HCT116 (cell line): ENCODE measurements at regions of chr14 and their contacts with region 1.

Region 1: GRCh38 chr14:36070031-36070719 is 106.3 kb downstream of the PTCSC3 start:
- DNase-seq: peak; percentile 55
- ATAC-seq: peak; percentile 82
- H3K4me3 ChIP-seq: no peak overlapping the region
- H3K27ac ChIP-seq: no peak overlapping the region
- H3K4me1 ChIP-seq: peaks cover 12 to 17% of the 10 kb centered on the region in 2 experiments
- H3K27me3 ChIP-seq: no peaks in the 10 kb centered on the region
- CTCF ChIP-seq: peak; percentile 59 to 96 (median 89); a peak in 5 of 6 replicates
- POLR2A ChIP-seq: no peak
- RAD21 ChIP-seq: peak; percentile 80

Region 2: DNA sequence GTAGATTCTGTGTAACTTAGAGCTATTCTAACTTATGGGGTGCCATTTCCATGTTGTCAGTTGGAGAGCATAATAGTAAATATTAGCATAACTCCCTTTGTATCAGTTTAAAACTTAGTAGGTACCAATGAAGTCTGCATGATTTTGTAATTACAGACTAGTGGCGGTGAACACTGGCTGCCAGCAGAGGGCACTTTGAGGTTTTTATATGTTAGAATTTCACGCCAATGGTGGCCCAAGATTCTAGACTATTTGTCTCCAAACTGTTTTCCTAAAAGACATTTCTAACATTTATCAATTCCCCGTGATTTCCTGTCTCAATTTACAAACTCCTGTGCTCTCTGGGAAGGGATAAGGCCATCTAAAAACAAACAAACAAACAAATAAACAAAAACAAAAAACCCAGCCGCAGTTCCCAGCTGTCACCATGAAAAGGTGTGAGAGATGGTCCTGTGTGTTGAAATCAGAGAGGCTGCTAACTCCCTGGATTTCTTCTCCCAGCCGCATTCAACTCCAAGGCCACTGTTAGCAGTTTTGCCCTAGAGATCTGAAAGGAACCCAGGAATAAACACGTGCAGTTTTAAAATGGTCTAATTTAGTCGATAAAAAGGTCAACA is 186.4 kb before region 1 on chr14:
- CTCF ChIA-PET with region 1: interaction called, 62 read pairs
- POLR2A ChIA-PET with region 1: no interaction called
- RAD21 ChIA-PET with region 1: interaction called in 1 of 2 experiments, 3 read pairs
- intact Hi-C with region 1: loop called (anchors 2 kb)
- DNase-seq: no peak
- ATAC-seq: peak; percentile 70
- H3K4me3 ChIP-seq: no peak overlapping the region
- H3K27ac ChIP-seq: no peak overlapping the region
- H3K4me1 ChIP-seq: peaks cover 5 to 6% of the 10 kb centered on the region in 2 experiments
- H3K27me3 ChIP-seq: no peaks in the 10 kb centered on the region
- CTCF ChIP-seq: peak; percentile 46 to 84 (median 76); a peak in 5 of 6 replicates
- POLR2A ChIP-seq: no peak
- RAD21 ChIP-seq: peak; percentile 56

Region 3: DNA sequence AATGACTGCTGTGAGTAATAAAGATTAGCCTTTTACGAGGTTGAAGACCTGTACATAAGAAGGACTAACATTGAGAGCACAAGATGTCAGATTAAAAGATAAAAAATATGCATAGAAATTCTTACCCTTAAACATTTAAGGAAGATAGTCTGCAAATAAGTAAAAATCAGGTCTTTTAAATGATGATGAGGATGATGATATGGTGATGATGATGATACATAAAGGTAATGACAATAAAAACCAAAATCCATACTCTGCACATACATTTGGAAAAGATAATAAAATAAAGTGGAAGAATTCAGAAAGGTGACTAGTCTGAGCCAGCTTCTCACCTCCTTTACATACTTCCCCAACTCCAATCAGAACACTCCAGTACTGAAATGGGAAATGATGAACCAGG is 18.1 kb before region 1 on chr14:
- CTCF ChIA-PET with region 1: interaction called, 13 read pairs
- POLR2A ChIA-PET with region 1: no interaction called
- RAD21 ChIA-PET with region 1: no interaction called
- intact Hi-C with region 1: no loop called
- DNase-seq: no peak
- ATAC-seq: no peak
- H3K4me3 ChIP-seq: no peak overlapping the region
- H3K27ac ChIP-seq: no peak overlapping the region
- H3K4me1 ChIP-seq: no peaks in the 10 kb centered on the region
- H3K27me3 ChIP-seq: no peaks in the 10 kb centered on the region
- CTCF ChIP-seq: no peak
- POLR2A ChIP-seq: no peak
- RAD21 ChIP-seq: no peak

Region 4: GRCh38 chr14:36083317-36083716 is 13.1 kb after region 1 on chr14:
- CTCF ChIA-PET with region 1: interaction called, 25 read pairs
- POLR2A ChIA-PET with region 1: no interaction called
- RAD21 ChIA-PET with region 1: no interaction called
- intact Hi-C with region 1: no loop called
- DNase-seq: no peak
- ATAC-seq: no peak
- H3K4me3 ChIP-seq: no peak overlapping the region
- H3K27ac ChIP-seq: no peak overlapping the region
- H3K4me1 ChIP-seq: no peaks in the 10 kb centered on the region
- H3K27me3 ChIP-seq: no peaks in the 10 kb centered on the region
- CTCF ChIP-seq: no peak
- POLR2A ChIP-seq: no peak
- RAD21 ChIP-seq: no peak

Region 5: GRCh38 chr14:36373982-36374673 is 304.0 kb after region 1 on chr14:
- CTCF ChIA-PET with region 1: interaction called, 29 read pairs
- POLR2A ChIA-PET with region 1: no interaction called
- RAD21 ChIA-PET with region 1: interaction called in 1 of 2 experiments, 3 read pairs
- intact Hi-C with region 1: loop called (anchors 1 kb)
- DNase-seq: peak; percentile 82
- ATAC-seq: peak; percentile 100
- H3K4me3 ChIP-seq: no peak overlapping the region
- H3K27ac ChIP-seq: no peak overlapping the region
- H3K4me1 ChIP-seq: no peaks in the 10 kb centered on the region
- H3K27me3 ChIP-seq: no peaks in the 10 kb centered on the region
- CTCF ChIP-seq: peak; percentile 73 to 93 (median 90)
- POLR2A ChIP-seq: no peak
- RAD21 ChIP-seq: peak; percentile 76

Region 6: DNA sequence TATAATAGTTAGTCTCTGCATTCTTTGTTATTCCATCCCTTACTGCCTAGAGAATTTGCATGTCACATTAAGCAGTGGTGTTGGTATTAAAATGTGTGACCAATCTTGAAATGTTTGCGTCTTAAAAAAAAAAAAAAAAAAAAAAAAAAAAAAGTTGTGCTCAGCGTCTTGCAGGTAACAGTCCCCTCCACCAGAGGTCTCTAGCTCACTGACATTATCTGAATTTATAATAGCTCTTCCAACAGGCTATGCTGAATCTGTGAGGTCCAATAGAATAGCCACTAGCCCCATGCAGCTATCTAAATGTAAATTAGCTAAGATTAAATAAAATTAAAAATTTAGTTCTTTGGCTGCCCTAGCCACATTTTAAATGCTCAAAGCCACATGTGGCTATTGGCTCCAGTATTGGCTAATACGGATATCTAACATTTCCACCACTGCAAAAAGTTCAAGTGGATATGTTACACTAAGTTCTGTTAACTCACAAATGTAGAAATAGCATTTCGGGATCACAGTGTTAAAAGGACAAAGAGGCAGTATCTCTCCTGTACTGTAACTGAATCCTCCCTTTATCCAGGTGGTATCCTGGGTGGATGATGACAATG is 483.6 kb after region 1 on chr14:
- CTCF ChIA-PET with region 1: interaction called, 59 read pairs
- POLR2A ChIA-PET with region 1: interaction called, 4 read pairs
- RAD21 ChIA-PET with region 1: interaction called in 1 of 2 experiments, 7 read pairs
- intact Hi-C with region 1: loop called (anchors 2 kb)
- DNase-seq: peak; percentile 41
- ATAC-seq: peak; percentile 89
- H3K4me3 ChIP-seq: no peak overlapping the region
- H3K27ac ChIP-seq: no peak overlapping the region
- H3K4me1 ChIP-seq: no peaks in the 10 kb centered on the region
- H3K27me3 ChIP-seq: no peaks in the 10 kb centered on the region
- CTCF ChIP-seq: peak; percentile 67 to 72 (median 72); a peak in 5 of 6 replicates
- POLR2A ChIP-seq: no peak
- RAD21 ChIP-seq: peak; percentile 67

Region 7: GRCh38 chr14:36941783-36942521 is 871.8 kb after region 1 on chr14:
- CTCF ChIA-PET with region 1: interaction called, 14 read pairs
- POLR2A ChIA-PET with region 1: no interaction called
- RAD21 ChIA-PET with region 1: interaction called in 1 of 2 experiments, 5 read pairs
- intact Hi-C with region 1: no loop called
- DNase-seq: peak; percentile 60
- ATAC-seq: peak; percentile 93
- H3K4me3 ChIP-seq: no peak overlapping the region; a peak in 1 of 4 replicates
- H3K27ac ChIP-seq: no peak overlapping the region
- H3K4me1 ChIP-seq: peaks cover 0 to 4% of the 10 kb centered on the region in 2 experiments; a peak in 1 of 4 replicates
- H3K27me3 ChIP-seq: no peaks in the 10 kb centered on the region
- CTCF ChIP-seq: peak; percentile 84 to 97 (median 96)
- POLR2A ChIP-seq: no peak
- RAD21 ChIP-seq: peak; percentile 82